Head of caudate nucleus (tissue), 42 donors: ENCODE measurements at regions of chr1 and their contacts with region 1.

Region 1: DNA sequence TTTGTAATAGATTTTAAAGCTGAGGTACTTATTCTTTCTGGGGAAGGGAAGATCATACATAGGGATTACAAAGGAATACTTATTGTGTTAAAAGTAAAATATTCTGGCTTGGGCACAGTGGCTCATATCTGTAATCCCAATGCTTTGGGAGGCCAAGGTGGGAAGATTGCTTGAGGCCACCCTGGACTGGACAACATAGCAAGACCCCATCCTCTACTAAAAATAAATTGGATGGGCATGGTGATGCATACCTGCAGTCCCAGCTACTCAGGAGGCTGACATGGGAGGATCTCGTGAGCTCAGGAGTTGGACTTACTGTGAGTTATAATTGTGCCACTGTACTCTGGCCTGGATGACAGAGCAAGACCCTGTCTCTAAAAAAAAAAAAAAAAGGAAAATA is 27.6 kb downstream of the GABPB2 start:
- DNase-seq: peak in 1 of 42 donors; percentile 15

Region 2: GRCh38 chr1:151156515-151156819 is 58.3 kb after region 1 on chr1 and contains the start of gene TNFAIP8L2:
- intact Hi-C with region 1: loop called (anchors 10 kb)
- DNase-seq: peak in 24 of 42 donors; percentile 26 to 67 (median 44)